CD4-positive, alpha-beta memory T cell (primary cell): ENCODE measurements at regions of chr10 and their contacts with region 1.

Region 1: GRCh38 chr10:74234569-74234968 is 83.5 kb downstream of the ADK start:
- DNase-seq: peak in 4 of 5 donors; percentile 18 to 39 (median 28)
- H3K4me3 ChIP-seq: no peak overlapping the region
- H3K4me3 Mint-ChIP-seq: no peak overlapping the region
- H3K27ac ChIP-seq: no peak overlapping the region
- H3K27ac Mint-ChIP-seq: peak overlapping the region in 1 of 7 donors; percentile 13
- H3K4me1 ChIP-seq: no peaks in the 10 kb centered on the region
- H3K4me1 Mint-ChIP-seq: peaks cover 0 to 16% (median 8%) of the 10 kb centered on the region in 4 donors
- H3K27me3 ChIP-seq: no peaks in the 10 kb centered on the region
- H3K27me3 Mint-ChIP-seq: no peaks in the 10 kb centered on the region

Region 2: DNA sequence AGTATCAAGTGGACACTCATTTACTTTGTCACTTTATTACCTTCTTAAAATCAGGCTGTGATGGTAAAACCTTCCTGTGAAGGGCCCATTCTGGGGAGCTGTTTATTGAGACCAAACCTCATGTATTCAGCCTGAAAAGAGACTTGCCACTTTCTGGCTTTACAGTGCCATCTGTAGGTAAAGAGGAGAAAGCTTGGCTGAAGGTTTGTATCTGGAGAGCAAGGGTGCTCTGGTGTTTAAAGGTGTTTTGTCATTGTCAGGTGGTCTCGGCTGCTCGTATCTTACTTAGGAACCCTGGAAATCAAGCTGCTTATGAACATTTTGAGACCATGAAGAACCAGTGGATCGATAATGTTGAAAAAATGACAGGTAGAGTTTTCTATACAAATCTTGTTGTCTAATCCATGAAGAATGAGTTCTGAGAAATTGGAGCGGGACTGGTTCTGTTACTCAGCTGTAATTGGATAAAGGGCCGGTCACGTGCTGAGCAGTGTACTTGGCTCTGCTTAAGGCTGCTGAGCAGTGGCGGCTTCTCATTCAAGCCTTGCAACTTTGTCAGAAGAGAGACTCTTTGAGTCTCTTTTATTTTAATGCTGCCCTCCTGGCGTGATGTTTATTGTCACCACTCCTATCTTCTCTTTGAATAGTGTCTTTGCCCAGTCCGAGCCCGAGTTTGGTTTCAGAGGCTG is 130.9 kb before region 1 on chr10:
- CTCF ChIA-PET with region 1: interaction called, 13 read pairs
- POLR2A ChIA-PET with region 1: no interaction called
- intact Hi-C with region 1: no loop called
- DNase-seq: no peak
- H3K4me3 ChIP-seq: no peak overlapping the region
- H3K4me3 Mint-ChIP-seq: no peak overlapping the region
- H3K27ac ChIP-seq: no peak overlapping the region
- H3K27ac Mint-ChIP-seq: peak overlapping the region in 4 of 7 donors; percentile 9 to 55 (median 52)
- H3K4me1 ChIP-seq: no peaks in the 10 kb centered on the region
- H3K4me1 Mint-ChIP-seq: peaks cover 0 to 4% (median under 1%) of the 10 kb centered on the region in 4 donors
- H3K27me3 ChIP-seq: no peaks in the 10 kb centered on the region
- H3K27me3 Mint-ChIP-seq: no peaks in the 10 kb centered on the region

Region 3: GRCh38 chr10:74120911-74121310 is 113.7 kb before region 1 on chr10:
- CTCF ChIA-PET with region 1: interaction called, 39 read pairs
- POLR2A ChIA-PET with region 1: no interaction called
- intact Hi-C with region 1: no loop called
- DNase-seq: no peak
- H3K4me3 ChIP-seq: no peak overlapping the region
- H3K4me3 Mint-ChIP-seq: no peak overlapping the region
- H3K27ac ChIP-seq: no peak overlapping the region
- H3K27ac Mint-ChIP-seq: peak overlapping the region in 5 of 7 donors; percentile 15 to 48 (median 25)
- H3K4me1 ChIP-seq: no peaks in the 10 kb centered on the region
- H3K4me1 Mint-ChIP-seq: no peaks in the 10 kb centered on the region
- H3K27me3 ChIP-seq: no peaks in the 10 kb centered on the region
- H3K27me3 Mint-ChIP-seq: no peaks in the 10 kb centered on the region

Region 4: DNA sequence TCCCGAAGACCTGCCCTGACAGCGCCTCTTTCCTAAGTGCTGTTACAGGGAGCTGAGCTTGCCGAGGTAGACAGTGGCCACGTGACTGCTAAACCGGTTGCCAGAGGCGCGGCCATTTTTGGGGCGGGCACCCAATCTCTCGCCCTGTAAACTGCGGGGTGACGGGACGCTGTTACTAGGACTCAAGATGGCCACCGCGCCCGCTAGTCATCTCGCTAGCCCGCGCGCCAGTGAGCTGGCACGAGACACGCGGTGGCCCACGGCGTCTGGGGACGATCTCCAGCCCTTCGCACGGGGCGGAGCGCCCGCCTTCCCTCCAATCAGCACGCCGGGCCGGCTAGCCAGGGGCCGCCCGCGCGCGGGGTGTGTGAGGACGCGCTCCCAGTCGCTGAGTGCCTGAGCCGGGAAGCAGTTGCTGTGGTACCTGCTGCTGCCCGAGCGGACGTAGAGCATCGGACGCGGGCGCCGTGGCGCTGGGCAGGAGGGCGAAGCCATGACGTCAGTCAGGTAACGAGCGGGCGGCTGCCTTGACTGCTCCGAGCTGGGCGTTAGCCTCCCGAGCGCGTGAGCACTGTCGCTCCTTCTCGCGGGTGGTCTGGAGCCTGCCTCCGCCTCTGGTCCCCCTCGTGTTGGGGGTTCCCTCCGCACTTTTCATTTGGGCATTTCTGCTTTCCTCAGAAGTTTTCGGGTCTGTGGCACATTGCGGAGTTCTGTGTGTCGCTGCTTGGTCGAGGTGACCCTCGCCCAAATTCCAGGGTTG is 58.0 kb before region 1 on chr10:
- CTCF ChIA-PET with region 1: interaction called, 5 read pairs
- POLR2A ChIA-PET with region 1: interaction called, 10 read pairs
- intact Hi-C with region 1: loop called (anchors 5 kb)
- DNase-seq: peak; percentile 95 to 98 (median 97)
- H3K4me3 ChIP-seq: peak overlapping the region; percentile 82 to 92
- H3K4me3 Mint-ChIP-seq: peak overlapping the region; percentile 90 to 94 (median 93)
- H3K27ac ChIP-seq: peak overlapping the region; percentile 76
- H3K27ac Mint-ChIP-seq: peak overlapping the region; percentile 96 to 98 (median 97)
- H3K4me1 ChIP-seq: peaks cover 42% of the 10 kb centered on the region
- H3K4me1 Mint-ChIP-seq: peaks cover 24 to 49% (median 39%) of the 10 kb centered on the region in 4 donors
- H3K27me3 ChIP-seq: no peaks in the 10 kb centered on the region
- H3K27me3 Mint-ChIP-seq: no peaks in the 10 kb centered on the region